IMR-90 (cell line): ENCODE measurements at regions of chr4 and their contacts with region 1.

Region 1: DNA sequence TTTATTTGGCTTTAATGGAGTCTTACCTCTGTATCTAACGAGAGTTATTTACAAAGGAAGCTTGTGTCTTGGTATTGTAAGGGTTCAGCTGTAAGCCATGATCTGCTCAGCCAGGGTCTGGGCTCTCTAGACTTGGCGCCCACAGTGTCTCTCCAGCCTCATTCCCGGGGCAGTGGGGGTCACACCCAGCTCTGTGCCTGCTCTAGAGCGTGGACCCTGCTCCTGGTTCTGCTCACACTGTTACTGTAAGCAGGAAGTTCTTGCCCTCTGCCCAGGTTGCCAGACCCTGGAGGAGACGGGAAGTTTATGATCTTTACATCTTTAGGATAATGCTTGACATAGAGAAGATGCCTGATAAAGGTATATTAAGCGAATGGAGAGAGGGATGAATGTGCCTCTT is 235.7 kb downstream of the PTTG2 start:
- DNase-seq: no peak
- ATAC-seq: no peak
- H3K4me3 ChIP-seq: no peak overlapping the region
- H3K27ac ChIP-seq: no peak overlapping the region
- H3K4me1 ChIP-seq: no peaks in the 10 kb centered on the region
- H3K27me3 ChIP-seq: peaks cover 11% of the 10 kb centered on the region
- CTCF ChIP-seq: no peak
- POLR2A ChIP-seq: no peak
- RAD21 ChIP-seq: no peak

Region 2: GRCh38 chr4:37446016-37446415 is 749.9 kb before region 1 on chr4:
- CTCF ChIA-PET with region 1: no interaction called
- POLR2A ChIA-PET with region 1: no interaction called
- dilution Hi-C with region 1: no loop called
- in situ Hi-C with region 1: no loop called
- intact Hi-C with region 1: loop called (anchors 5 kb)
- DNase-seq: no peak
- ATAC-seq: no peak
- H3K4me3 ChIP-seq: no peak overlapping the region
- H3K27ac ChIP-seq: no peak overlapping the region
- H3K4me1 ChIP-seq: no peaks in the 10 kb centered on the region
- H3K27me3 ChIP-seq: peaks cover 2% of the 10 kb centered on the region; the same call in 1 of the 2 replicates
- CTCF ChIP-seq: no peak
- POLR2A ChIP-seq: no peak
- RAD21 ChIP-seq: no peak

Region 3: GRCh38 chr4:39544580-39545315 is 1348.8 kb after region 1 on chr4:
- CTCF ChIA-PET with region 1: no interaction called
- POLR2A ChIA-PET with region 1: no interaction called
- dilution Hi-C with region 1: no loop called
- in situ Hi-C with region 1: no loop called
- intact Hi-C with region 1: no loop called
- DNase-seq: peak; percentile 67
- ATAC-seq: peak; percentile 50
- H3K4me3 ChIP-seq: no peak overlapping the region
- H3K27ac ChIP-seq: peak overlapping the region; percentile 69; the same call in 1 of the 2 replicates
- H3K4me1 ChIP-seq: peaks cover 22% of the 10 kb centered on the region
- H3K27me3 ChIP-seq: no peaks in the 10 kb centered on the region
- CTCF ChIP-seq: no peak
- POLR2A ChIP-seq: no peak
- RAD21 ChIP-seq: no peak